Mammary epithelial cell (primary cell): ENCODE measurements at regions of chr13 and their contacts with region 1.

Region 1: GRCh38 chr13:47277774-47278173 is 380.9 kb upstream of the HTR2A start:
- DNase-seq: peak; percentile 26
- H3K4me3 ChIP-seq: no peak overlapping the region
- H3K27ac ChIP-seq: no peak overlapping the region
- H3K4me1 ChIP-seq: no peaks in the 10 kb centered on the region
- H3K27me3 ChIP-seq: no peaks in the 10 kb centered on the region
- CTCF ChIP-seq: no peak

Region 2: GRCh38 chr13:46267166-46267565 is 1010.6 kb before region 1 on chr13:
- CTCF ChIA-PET with region 1: no interaction called
- dilution Hi-C with region 1: no loop called
- in situ Hi-C with region 1: no loop called
- intact Hi-C with region 1: no loop called
- DNase-seq: no peak
- H3K4me3 ChIP-seq: no peak overlapping the region
- H3K27ac ChIP-seq: no peak overlapping the region
- H3K4me1 ChIP-seq: no peaks in the 10 kb centered on the region
- H3K27me3 ChIP-seq: peaks cover 4% of the 10 kb centered on the region
- CTCF ChIP-seq: no peak

Region 3: GRCh38 chr13:47455626-47456025 is 177.9 kb after region 1 on chr13:
- CTCF ChIA-PET with region 1: no interaction called
- dilution Hi-C with region 1: no loop called
- in situ Hi-C with region 1: no loop called
- intact Hi-C with region 1: no loop called
- DNase-seq: peak; percentile 6
- H3K4me3 ChIP-seq: no peak overlapping the region
- H3K27ac ChIP-seq: no peak overlapping the region
- H3K4me1 ChIP-seq: no peaks in the 10 kb centered on the region
- H3K27me3 ChIP-seq: no peaks in the 10 kb centered on the region
- CTCF ChIP-seq: peak; percentile 8 to 14

Region 4: DNA sequence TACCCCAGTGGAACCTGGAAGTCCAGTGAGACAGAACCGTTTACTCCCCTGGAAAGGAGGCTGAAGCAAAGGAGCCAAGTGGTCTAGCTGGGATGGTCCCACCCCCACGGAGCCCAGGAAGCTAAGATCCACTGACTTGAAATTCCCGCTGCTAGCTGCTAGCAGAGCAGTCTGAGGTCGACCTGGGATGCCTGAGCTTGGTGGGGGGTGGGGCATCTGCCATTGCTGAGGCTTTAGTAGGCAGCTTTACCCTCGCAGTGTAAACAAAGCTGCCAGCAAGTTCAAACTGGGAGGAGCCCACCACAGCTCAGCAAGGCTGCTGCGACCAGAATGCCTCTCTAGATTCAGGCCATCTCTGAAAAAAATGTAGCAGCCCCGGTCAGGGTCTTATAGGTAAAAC is 286.3 kb after region 1 on chr13:
- CTCF ChIA-PET with region 1: interaction called, 12 read pairs
- dilution Hi-C with region 1: no loop called
- in situ Hi-C with region 1: no loop called
- intact Hi-C with region 1: no loop called
- DNase-seq: no peak
- H3K4me3 ChIP-seq: no peak overlapping the region
- H3K27ac ChIP-seq: no peak overlapping the region
- H3K4me1 ChIP-seq: no peaks in the 10 kb centered on the region
- H3K27me3 ChIP-seq: peaks cover 3% of the 10 kb centered on the region
- CTCF ChIP-seq: no peak